CD8-positive, alpha-beta memory T cell (primary cell): ENCODE measurements at regions of chr2 and their contacts with region 1.

Region 1: DNA sequence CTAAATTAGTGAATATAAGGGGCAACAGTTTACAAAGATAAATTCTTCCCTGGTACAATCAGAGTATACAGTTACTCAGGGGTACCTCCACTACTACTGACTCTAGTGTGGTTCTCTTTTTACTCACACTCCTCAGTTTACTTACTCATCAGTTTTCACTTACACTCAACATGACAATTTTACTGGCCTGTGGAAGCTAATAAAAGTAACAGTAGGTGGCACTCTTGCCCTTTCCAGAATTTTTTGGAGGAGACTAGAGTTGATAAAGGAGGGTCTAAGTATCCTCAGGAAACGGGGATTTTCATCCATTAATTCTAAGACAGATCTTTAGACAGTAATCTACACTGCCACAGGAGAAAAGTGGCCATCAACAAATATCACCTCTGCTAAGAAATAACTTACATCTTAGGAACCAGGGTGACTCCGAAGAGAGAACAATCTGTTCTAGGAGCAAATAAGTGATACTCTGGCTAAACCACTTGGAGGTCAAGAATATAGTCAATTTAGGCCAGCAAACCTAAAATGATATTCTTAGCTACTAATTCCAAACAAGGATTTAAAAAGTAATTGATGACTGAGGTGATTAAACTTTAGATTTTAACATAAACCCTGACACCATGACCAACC is 61.3 kb downstream of the ATL2 start:
- DNase-seq: peak in 2 of 5 donors; percentile 14 to 35
- H3K4me3 ChIP-seq: no peak overlapping the region
- H3K4me3 Mint-ChIP-seq: no peak overlapping the region
- H3K27ac ChIP-seq: no peak overlapping the region
- H3K27ac Mint-ChIP-seq: no peak overlapping the region
- H3K4me1 ChIP-seq: no peaks in the 10 kb centered on the region
- H3K4me1 Mint-ChIP-seq: no peaks in the 10 kb centered on the region
- H3K27me3 ChIP-seq: no peaks in the 10 kb centered on the region
- H3K27me3 Mint-ChIP-seq: no peaks in the 10 kb centered on the region

Region 2: DNA sequence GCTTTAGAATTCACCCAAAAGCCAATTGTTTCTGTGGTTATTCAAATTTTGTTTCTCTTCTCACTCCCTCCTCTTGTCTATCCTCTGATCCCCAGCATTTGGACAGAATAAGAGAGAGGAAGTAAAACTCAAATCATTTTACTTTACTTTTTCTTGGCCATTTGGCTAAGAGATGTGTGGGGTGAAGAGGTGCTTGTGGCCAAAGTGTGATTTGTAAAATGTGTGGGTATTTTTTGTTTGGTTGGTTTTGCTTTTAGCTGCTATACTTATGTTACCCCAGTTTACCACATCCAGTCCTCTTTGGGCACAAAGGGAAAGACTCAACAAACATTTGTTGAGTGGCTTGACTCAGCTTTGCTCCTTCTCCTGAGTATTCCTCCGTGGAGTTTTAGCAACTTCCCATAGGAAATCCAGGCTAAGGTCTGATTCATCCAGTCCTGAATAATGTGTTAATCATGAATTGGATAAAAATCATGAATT is 130.8 kb before region 1 on chr2:
- CTCF ChIA-PET with region 1: no interaction called
- POLR2A ChIA-PET with region 1: no interaction called
- DNase-seq: peak in 1 of 5 donors; percentile 14
- H3K4me3 ChIP-seq: no peak overlapping the region
- H3K4me3 Mint-ChIP-seq: peak overlapping the region in 1 of 7 donors; percentile 4
- H3K27ac ChIP-seq: no peak overlapping the region
- H3K27ac Mint-ChIP-seq: no peak overlapping the region
- H3K4me1 ChIP-seq: no peaks in the 10 kb centered on the region
- H3K4me1 Mint-ChIP-seq: peaks cover 2 to 11% (median 10%) of the 10 kb centered on the region in 3 donors
- H3K27me3 ChIP-seq: no peaks in the 10 kb centered on the region
- H3K27me3 Mint-ChIP-seq: peaks cover 0 to 23% of the 10 kb centered on the region in 2 donors

Region 3: DNA sequence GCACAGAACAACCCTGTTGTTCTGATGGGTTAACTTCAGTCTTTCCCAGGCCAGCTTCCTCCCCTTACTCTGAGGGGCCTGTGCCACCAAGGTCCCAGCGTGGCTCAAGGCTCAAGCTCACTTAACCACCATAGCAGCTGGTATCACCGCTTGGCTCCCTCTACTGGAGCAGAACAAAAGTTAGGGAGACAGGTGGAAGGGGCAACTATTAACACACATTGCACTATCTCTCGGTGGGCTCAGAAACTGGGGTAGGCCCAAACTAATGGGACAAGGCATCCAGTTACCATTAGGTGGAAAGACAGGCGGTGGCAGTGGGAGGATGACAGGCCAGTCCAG is 149.9 kb after region 1 on chr2:
- CTCF ChIA-PET with region 1: interaction called, 14 read pairs
- POLR2A ChIA-PET with region 1: no interaction called
- DNase-seq: peak in 1 of 5 donors; percentile 12
- H3K4me3 ChIP-seq: no peak overlapping the region
- H3K4me3 Mint-ChIP-seq: no peak overlapping the region
- H3K27ac ChIP-seq: no peak overlapping the region
- H3K27ac Mint-ChIP-seq: no peak overlapping the region
- H3K4me1 ChIP-seq: no peaks in the 10 kb centered on the region
- H3K4me1 Mint-ChIP-seq: no peaks in the 10 kb centered on the region
- H3K27me3 ChIP-seq: no peaks in the 10 kb centered on the region
- H3K27me3 Mint-ChIP-seq: peaks cover 0 to 9% of the 10 kb centered on the region in 2 donors